ENCODE measurements at regions of chr10 and their contacts with region 1.

Region 1: DNA sequence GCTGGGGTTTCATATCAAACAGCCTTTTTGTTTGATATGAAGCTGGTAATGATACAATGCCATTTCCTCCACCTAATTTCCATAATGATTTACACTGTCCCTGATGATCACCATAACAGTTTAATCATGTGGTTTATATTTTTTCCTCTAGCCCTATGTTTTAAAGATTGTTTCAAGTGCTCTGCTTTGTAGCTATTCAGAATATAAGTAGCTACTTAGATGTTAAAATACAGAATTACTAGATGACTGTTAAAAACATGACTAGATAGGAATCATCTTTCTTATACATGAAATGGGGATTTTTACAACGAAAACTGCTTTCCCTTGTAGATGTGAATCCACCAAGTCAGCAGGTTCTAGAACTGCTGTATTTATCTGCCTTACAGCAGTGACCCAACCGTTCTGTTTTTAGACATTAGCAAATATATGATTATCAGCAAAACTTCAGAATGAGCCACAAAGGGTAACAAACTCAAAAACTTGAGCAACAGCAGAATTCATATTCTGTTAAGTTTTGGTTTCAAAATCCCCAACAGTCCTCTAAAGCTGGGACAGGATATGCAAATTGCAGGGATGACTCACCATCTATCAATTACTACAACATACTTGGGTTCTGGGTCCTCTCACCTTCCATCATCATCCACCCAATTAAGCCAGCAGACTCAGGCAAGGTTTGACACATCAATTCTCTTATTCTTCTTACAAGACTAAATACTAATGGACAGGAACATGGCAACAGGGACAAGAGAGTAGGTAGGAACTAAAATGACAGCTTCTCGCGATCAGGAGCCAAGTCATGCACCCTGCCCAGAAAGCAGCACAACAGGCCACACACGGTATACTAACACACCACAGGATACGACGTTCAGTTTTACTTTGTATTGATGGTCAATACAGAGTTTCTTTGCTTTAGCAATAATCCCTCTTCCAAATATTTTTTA is 83.9 kb downstream of the PIP4K2A start:
- DNase-seq: peak; percentile 64
- H3K4me3 Mint-ChIP-seq: peak overlapping the region; percentile 72
- H3K27ac Mint-ChIP-seq: peak overlapping the region; percentile 98
- H3K4me1 Mint-ChIP-seq: peaks cover 92% of the 10 kb centered on the region
- H3K27me3 Mint-ChIP-seq: no peaks in the 10 kb centered on the region

Region 2: DNA sequence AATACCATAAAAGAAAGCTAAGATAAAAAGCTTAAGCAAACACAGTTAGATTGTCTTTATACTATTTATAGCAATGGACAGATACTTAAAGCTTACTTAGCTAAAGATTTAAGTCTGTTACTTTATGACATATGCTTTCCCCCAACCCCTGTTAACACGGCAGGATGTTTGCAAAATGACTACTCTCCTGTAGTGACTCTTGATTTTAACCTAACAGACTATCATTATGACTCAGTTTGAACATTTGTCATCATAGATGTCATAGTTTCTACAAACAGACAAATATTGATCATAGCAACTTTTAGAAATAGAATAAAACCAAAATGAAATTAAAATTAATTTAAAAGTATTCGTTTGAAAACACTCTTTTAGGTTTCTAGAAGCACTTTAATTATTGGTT is 322.1 kb before region 1 on chr10:
- CTCF ChIA-PET with region 1: no interaction called
- POLR2A ChIA-PET with region 1: no interaction called
- intact Hi-C with region 1: loop called (anchors 1 kb)
- DNase-seq: peak; percentile 53
- H3K4me3 Mint-ChIP-seq: no peak overlapping the region
- H3K27ac Mint-ChIP-seq: no peak overlapping the region
- H3K4me1 Mint-ChIP-seq: peaks cover 8% of the 10 kb centered on the region
- H3K27me3 Mint-ChIP-seq: no peaks in the 10 kb centered on the region

Region 3: GRCh38 chr10:22599048-22599561 is 31.4 kb before region 1 on chr10:
- CTCF ChIA-PET with region 1: no interaction called
- POLR2A ChIA-PET with region 1: no interaction called
- intact Hi-C with region 1: loop called (anchors 1 kb)
- DNase-seq: no peak
- H3K4me3 Mint-ChIP-seq: no peak overlapping the region
- H3K27ac Mint-ChIP-seq: peak overlapping the region; percentile 57
- H3K4me1 Mint-ChIP-seq: peaks cover 75% of the 10 kb centered on the region
- H3K27me3 Mint-ChIP-seq: no peaks in the 10 kb centered on the region

Region 4: DNA sequence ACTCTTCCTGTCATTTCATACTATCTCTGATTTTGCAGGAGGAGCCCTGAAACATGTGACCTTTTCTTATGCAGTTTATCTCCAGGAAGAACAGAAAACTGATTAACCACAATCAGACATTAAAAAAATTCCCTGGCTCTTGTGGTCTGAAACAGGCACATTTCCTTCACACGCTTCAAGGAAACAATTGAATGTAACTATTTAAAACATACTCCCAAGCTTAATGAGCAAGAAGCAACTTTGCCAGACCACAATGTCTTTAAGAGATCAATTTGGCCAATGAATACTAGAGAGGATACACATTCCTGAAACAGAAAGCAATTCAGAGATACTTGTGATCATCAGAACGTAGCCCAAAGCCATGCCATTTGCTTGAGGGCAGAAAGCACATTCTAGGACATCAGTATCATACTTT is 18.1 kb after region 1 on chr10:
- CTCF ChIA-PET with region 1: interaction called, 6 read pairs
- POLR2A ChIA-PET with region 1: interaction called, 43 read pairs
- intact Hi-C with region 1: loop called (anchors 1 kb)
- DNase-seq: no peak
- H3K4me3 Mint-ChIP-seq: peak overlapping the region; percentile 74
- H3K27ac Mint-ChIP-seq: peak overlapping the region; percentile 95
- H3K4me1 Mint-ChIP-seq: peaks cover 93% of the 10 kb centered on the region
- H3K27me3 Mint-ChIP-seq: no peaks in the 10 kb centered on the region

Region 5: DNA sequence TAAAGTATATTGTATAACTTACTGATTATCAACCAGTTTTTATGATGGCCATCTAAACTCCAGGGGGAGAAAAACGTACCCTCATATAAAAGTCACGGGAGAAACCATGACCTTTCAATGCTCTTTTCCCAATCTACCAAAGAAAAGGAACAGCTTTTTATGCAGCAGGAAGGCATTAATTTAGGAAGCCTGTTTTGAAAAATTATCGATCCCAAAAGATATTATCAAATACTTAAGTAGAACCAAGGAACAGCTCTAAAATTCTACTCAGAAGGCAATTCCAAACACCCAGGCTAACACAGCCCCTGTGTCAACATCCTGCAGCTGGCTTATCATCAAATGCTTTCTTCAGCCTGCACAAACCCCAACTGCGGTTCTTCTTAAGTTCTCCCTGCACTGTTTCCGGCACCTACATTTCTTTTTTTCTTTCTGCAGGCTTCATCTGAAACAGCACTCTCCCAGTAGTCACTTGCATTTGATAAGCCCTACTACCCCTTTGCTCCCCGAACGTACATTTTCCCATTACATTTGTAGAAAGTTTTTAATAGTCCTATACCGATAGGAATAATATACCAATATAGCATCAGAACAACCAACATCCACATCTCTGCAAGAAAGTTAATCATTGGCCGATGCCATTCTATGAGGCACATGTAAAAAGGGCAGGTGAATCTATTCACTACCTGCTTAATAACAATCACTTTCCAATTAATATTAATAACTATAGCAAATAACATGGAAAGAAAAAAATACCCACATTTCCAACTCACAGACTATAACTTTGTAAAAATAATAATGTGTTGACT is 36.0 kb after region 1 on chr10:
- CTCF ChIA-PET with region 1: interaction called, 4 read pairs
- POLR2A ChIA-PET with region 1: interaction called, 3 read pairs
- intact Hi-C with region 1: loop called (anchors 1 kb)
- DNase-seq: peak; percentile 71
- H3K4me3 Mint-ChIP-seq: peak overlapping the region; percentile 72
- H3K27ac Mint-ChIP-seq: peak overlapping the region; percentile 84
- H3K4me1 Mint-ChIP-seq: peaks cover 75% of the 10 kb centered on the region
- H3K27me3 Mint-ChIP-seq: no peaks in the 10 kb centered on the region

Region 6: DNA sequence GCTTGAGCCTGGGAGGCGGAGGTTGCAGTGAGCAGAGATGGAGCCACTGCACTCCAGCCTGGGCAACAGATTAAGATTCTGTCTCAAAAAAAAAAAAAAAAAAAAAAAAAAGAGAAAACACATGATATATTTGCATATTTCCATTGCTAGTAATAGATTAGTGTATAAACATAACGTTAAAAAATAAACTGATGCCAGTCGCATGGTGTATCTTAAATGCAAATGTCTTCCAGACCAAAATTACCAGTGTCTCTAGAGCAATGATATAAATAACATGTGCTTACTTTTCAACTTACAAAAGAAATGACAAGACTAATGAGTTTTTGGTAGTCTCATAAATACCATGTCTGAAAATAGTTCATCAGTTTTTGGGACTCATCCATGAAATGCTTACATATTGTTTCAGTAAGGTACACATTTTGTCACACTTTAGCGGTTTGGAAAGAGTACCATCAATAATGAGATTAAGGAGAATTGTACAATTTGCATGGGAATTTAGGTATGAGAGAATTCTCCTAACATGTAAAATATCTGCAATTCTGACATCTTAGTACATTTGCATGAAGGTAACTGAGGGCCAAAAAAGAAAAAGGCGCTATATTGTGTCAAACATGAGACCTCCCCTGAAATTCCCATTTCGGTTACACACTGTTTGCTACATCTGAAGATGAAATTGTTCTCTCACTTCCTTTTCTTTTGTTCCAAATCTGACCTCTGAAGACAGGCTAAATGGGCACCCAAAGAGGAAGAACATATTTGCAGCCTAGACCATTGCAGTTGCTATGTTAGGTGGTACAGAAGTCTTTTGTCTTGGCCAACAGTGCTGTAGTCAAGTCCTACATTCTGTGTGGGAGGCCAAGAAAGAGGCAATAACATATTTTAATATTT is 135.4 kb after region 1 on chr10:
- CTCF ChIA-PET with region 1: no interaction called
- POLR2A ChIA-PET with region 1: no interaction called
- intact Hi-C with region 1: no loop called
- DNase-seq: no peak
- H3K4me3 Mint-ChIP-seq: no peak overlapping the region
- H3K27ac Mint-ChIP-seq: no peak overlapping the region
- H3K4me1 Mint-ChIP-seq: no peaks in the 10 kb centered on the region
- H3K27me3 Mint-ChIP-seq: no peaks in the 10 kb centered on the region